Activated CD4-positive, alpha-beta T cell treated with anti-CD3 and anti-CD28 coated beads for 36 hours (primary cell): ENCODE measurements at regions of chr2 and their contacts with region 1.

Region 1: DNA sequence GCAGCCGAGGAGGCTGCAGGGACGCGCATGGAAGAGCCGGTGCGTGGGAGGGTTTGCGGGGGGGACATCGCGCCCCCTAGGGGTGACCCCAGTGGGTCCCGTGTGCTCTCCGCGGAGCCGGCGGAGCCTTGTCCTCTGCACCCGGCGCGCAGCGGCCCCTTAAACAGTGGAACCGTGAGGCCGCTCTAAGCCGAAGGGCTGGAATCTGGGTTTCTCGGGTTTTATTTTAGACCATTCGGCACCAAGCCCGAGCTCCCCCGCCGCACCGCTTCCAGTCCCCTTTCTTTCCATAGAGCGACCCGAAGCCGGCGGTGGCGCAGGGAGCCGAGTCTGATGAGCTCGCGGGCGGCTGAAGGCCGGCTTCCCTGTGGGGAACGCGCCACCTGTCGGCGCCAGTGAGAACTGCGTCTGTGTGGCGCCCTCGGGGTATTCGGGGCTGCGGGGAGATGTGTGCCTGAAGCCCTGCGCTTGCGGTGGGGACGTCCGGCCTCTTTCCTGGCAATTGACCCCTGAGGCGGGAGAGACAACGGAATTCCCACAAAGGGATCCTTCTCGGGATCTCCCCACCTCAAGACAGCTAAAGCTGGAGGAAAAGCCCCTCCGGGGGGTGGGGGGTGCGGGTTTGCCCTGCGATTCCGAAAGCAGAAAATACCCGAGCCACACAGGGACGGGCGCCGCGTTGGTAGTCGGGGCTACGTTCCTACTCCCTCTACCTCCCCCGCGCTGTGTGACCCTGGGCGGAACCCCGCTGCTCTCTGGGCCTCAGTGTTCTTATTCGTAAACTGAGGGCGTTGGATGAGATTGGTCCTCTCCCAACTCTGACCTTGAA is 8.2 kb upstream of the EN1 start:
- DNase-seq: peak; percentile 91
- ATAC-seq: peak; percentile 86
- H3K4me3 Mint-ChIP-seq: peak overlapping the region; percentile 50
- H3K27ac Mint-ChIP-seq: no peak overlapping the region
- H3K4me1 Mint-ChIP-seq: peaks cover 26% of the 10 kb centered on the region
- H3K27me3 Mint-ChIP-seq: peaks cover 73% of the 10 kb centered on the region

Region 2: GRCh38 chr2:118032169-118033013 is 823.3 kb before region 1 on chr2:
- CTCF ChIA-PET with region 1: interaction called, 10 read pairs
- POLR2A ChIA-PET with region 1: no interaction called
- intact Hi-C with region 1: loop called (anchors 1 to 5 kb)
- DNase-seq: peak; percentile 65
- ATAC-seq: peak; percentile 83
- H3K4me3 Mint-ChIP-seq: no peak overlapping the region
- H3K27ac Mint-ChIP-seq: no peak overlapping the region
- H3K4me1 Mint-ChIP-seq: no peaks in the 10 kb centered on the region
- H3K27me3 Mint-ChIP-seq: peaks cover 34% of the 10 kb centered on the region

Region 3: DNA sequence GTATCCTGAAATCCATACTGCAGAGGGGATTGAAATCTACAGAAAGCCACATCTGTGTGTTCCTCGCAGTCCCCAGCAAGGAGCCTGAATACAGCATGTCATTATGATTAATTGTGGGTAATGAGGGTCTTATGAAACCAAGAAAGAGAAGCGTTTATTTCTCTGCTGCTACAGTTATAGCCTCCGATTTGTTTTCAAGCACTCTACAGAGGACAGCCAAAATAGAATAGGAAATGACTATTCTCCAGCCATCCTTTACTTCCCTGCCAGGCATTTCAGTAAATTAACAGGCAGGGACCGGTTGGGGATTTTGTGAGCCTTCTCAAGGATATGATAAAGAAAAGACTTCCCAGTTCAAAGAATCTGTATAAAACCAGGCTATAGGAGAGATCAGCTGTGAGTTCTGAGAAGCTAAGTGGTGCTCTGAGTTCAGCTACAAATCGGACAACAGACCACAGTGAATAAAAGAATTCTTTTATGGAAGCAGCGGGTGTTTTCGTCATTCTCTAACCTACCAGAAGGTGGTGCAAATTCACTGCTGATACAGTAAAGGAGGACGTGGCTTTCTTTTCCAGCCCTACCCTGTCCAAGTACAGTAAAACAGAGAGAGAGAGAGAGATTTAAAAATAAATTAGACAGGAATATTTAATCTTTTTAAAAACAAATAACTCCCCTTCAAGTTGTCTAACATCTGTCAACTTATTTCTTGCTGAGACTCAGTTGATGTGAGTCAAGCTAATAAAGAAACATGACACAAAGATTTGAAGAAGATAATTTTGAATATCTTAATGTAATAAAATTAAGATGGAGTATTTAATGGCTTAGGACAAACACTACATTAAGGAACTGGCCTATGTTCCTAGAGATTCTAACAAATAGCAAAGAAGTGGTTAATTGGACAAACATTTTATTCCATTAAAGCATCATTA is 633.7 kb before region 1 on chr2:
- CTCF ChIA-PET with region 1: interaction called, 19 read pairs
- POLR2A ChIA-PET with region 1: no interaction called
- intact Hi-C with region 1: loop called (anchors 1 kb)
- DNase-seq: peak; percentile 46
- ATAC-seq: peak; percentile 73
- H3K4me3 Mint-ChIP-seq: no peak overlapping the region
- H3K27ac Mint-ChIP-seq: no peak overlapping the region
- H3K4me1 Mint-ChIP-seq: peaks cover 19% of the 10 kb centered on the region
- H3K27me3 Mint-ChIP-seq: peaks cover 56% of the 10 kb centered on the region

Region 4: DNA sequence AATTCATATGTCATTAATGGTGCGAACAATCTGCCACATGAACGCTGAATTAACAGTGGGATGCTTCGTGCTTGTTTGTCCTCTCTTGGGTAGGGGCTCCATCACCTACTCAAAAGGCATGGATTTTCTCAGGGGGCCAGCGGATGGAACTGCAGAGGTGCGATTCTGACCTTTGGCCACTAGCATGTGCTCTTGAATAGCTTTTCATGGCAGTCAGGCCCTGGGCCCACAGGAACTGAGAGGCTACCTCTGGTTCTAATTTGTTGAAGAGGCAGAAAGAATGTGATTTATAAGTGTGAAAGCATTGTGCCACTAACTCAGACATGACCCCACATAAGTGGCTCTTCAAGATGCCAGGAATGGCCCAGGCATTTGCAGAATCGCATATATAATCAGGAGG is 484.1 kb before region 1 on chr2:
- CTCF ChIA-PET with region 1: no interaction called
- POLR2A ChIA-PET with region 1: no interaction called
- intact Hi-C with region 1: loop called in 1 of 2 experiments (anchors 5 kb)
- DNase-seq: peak; percentile 36
- ATAC-seq: no peak
- H3K4me3 Mint-ChIP-seq: no peak overlapping the region
- H3K27ac Mint-ChIP-seq: no peak overlapping the region
- H3K4me1 Mint-ChIP-seq: no peaks in the 10 kb centered on the region
- H3K27me3 Mint-ChIP-seq: peaks cover 13% of the 10 kb centered on the region

Region 5: DNA sequence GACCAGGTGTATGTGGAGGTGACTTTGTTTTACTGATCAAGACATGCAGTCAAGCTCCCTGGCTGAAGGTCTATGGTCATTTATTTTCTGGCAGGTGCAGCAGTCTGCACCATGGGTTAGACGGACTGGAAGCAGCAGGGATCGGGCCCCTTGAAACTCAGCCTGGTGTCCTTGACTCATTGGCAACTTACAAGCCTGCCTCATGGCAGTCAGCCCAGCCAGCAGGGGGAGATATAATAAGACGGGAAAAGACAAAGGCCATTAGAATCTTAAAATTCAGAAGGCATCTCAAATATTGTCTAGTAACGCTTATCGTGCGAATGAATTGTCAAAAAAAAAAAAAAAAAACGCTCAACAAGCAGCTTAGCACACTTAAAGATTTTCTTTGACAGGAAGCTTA is 316.4 kb before region 1 on chr2:
- CTCF ChIA-PET with region 1: interaction called, 4 read pairs
- POLR2A ChIA-PET with region 1: no interaction called
- intact Hi-C with region 1: loop called in 1 of 2 experiments (anchors 1 kb)
- DNase-seq: peak; percentile 37
- ATAC-seq: no peak
- H3K4me3 Mint-ChIP-seq: no peak overlapping the region
- H3K27ac Mint-ChIP-seq: no peak overlapping the region
- H3K4me1 Mint-ChIP-seq: no peaks in the 10 kb centered on the region
- H3K27me3 Mint-ChIP-seq: no peaks in the 10 kb centered on the region

Region 6: GRCh38 chr2:119158563-119159347 is 303.1 kb after region 1 on chr2 and contains the start of gene C1QL2:
- CTCF ChIA-PET with region 1: no interaction called
- POLR2A ChIA-PET with region 1: no interaction called
- intact Hi-C with region 1: loop called in 1 of 2 experiments (anchors 5 kb)
- DNase-seq: peak; percentile 32
- ATAC-seq: no peak
- H3K4me3 Mint-ChIP-seq: no peak within 1 kb of the TSS
- H3K27ac Mint-ChIP-seq: no peak within 1 kb of the TSS
- H3K4me1 Mint-ChIP-seq: no peaks in the 10 kb centered on the region
- H3K27me3 Mint-ChIP-seq: peaks cover 52% of the 10 kb centered on the region
- total RNA-seq, gene C1QL2: not detected